ENCODE measurements at regions of chrX and their contacts with region 1.

Region 1: DNA sequence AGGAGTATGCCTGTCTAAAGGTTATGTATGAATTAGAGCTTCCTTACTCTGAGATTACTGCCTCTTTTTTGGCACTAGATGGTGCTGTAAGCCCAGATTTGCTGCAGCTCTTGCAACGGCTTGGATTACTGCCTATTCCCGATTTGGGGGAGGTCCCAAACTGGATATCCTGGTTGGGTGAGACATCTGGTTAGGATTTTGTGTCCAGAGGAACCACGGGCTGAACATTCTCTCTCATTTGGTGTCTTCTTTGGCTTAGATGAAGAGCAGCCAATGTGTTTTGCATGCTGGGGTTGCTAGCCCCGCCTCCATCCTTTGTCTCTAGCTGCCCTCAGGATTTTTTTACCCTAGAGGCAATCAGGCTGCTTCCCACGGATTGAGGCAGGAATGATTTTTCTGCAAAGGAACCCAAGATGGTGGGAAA is 31.9 kb downstream of the F8A1 start:
- DNase-seq: peak; percentile 36
- H3K4me3 ChIP-seq: no peak overlapping the region; the same call in 1 of the 2 replicates
- CTCF ChIP-seq: peak; percentile 43

Region 2: DNA sequence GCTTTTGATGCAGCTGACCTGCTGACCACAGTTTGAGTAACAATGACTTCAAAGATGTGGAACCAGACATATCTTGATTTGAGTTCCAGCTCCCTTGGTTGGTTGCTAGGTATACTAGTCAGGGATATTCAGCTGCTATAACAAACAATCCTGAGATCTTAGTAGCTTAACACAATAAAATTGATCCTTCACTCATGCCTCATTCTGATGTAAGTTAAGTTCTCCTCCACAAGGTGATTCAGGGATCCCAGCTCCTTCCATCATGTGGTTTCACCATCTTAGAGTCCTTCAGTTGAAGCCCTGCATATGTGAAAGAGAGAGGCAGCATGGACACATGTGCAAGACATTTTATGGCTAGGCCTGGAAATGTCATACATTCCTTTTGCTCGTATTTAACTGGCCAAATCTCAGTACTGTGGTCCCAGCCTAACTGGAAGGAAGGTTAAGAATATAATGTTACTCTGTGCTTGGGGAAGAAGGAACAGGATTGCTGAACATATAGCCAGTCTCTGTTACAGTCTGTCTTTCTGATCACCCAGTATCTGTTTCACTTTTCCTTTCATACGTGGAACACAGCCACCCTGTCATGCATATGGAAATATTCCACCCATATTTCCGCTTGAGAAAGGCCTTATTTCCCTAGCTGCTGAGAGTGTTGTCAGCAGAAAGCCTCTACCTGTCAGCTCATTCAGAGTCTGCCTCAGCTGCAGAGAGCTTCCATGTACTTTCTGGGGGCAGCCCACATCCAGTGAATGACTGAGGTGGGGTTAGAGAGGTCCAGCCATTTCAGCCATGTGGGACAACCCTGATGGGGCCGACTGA is 90.7 kb before region 1 on chrX:
- CTCF ChIA-PET with region 1: no interaction called
- POLR2A ChIA-PET with region 1: no interaction called
- DNase-seq: no peak
- H3K4me3 ChIP-seq: no peak overlapping the region
- CTCF ChIP-seq: no peak

Region 3: GRCh38 chrX:155026726-155027508 is 108.8 kb after region 1 on chrX and contains the start of gene FUNDC2:
- CTCF ChIA-PET with region 1: no interaction called
- POLR2A ChIA-PET with region 1: no interaction called
- DNase-seq: peak; percentile 57
- H3K4me3 ChIP-seq: peak within 1 kb of the TSS; percentile 65
- CTCF ChIP-seq: no peak

Region 4: DNA sequence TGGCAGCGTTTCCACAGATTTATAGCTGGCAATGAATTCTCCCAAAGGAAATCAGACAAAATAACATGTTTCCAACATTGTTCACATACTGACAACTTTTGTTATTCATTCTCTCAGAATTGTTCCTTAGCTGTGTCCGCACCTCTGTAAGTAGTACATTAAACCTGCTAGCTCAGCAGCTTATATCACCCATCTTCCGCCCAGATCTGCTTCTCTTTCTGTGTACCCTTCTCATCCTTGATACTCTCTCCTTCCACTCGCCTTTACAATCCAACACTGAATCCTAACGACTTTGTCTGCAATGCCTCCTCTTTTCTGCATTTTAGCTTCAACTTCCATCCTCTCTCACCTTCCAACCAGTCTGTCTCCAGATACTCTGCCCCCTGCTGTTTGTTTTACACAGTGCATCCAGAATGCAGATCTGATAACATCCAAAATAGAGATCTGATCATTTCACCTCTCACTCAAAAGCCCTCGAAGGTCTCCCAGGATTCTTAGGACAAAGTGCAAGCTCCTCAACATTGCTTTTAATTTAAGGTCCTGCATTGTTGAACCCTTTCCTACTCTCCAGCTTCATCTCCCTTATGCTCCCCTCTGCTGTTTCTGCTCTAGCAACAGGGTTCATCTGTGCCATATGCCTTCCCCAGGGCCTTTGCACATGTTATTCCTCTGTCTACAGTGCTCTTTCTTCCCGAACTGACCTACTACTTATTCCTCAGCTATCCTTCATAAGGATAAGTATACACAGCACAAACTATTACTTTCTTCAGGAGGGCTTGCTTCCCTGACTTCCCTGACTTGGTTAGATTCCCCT is 230.9 kb after region 1 on chrX:
- CTCF ChIA-PET with region 1: interaction called, 19 read pairs
- POLR2A ChIA-PET with region 1: no interaction called
- DNase-seq: no peak
- H3K4me3 ChIP-seq: no peak overlapping the region
- CTCF ChIP-seq: peak; percentile 21

Region 5: DNA sequence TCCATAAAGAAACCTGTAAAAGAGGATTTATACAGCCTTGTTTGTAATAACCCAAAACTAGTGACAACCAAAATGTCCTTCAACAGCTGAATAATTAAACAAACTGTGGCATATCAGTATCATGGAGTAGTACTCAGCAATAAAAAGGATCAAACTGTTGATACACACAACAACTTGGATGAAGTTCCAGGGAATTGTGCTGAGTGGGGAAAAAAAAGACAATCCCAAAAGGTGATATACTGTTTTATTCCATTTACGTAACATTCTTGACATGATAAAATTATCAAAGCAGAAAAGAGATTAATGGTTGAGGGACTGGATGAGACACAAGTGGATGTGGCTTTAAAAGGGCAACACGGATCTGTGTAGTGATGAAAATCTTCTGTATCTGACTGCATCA is 408.5 kb after region 1 on chrX:
- CTCF ChIA-PET with region 1: no interaction called
- POLR2A ChIA-PET with region 1: no interaction called
- DNase-seq: no peak
- H3K4me3 ChIP-seq: no peak overlapping the region
- CTCF ChIP-seq: no peak

Measured in AG04449 (cell line).